ENCODE measurements at regions of chr2 and their contacts with region 1.

Region 1: DNA sequence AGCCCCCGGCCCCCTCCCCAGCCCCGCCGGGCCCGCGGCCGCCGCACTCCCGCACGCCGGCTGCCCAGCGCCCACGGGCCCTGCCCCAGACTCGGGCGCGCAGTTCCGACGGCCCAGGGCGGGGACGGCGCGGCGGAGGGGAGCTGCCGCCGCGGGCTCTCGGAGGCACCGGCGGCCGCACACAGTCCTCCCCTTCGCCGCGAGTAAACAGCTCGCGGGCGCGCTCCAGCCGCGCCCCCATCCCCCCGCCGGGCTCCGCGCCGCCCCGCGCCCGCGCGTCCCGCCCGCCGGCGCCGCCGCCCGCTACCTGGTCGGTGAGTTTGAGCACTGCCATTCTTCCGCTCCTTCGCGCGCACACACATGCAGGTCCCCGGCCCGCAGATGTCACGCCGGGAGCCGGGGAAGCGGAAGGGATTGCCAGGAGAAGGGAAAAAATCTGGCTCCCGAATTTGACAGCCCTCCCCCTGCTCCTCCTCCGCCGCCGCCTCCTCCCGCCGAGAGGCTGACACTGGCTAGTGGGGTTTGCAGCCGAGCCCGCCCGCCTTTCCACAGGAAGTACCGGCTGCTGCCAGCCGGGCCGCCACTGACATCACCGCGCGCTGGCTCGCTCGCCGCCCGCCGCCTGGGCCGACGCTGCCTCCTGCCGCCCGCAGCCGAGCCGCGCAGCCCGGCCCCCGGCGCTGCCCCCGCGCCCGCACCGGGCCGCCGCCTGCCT is at the start of gene ANKRD44:
- DNase-seq: peak; percentile 83 to 90 (median 88)
- H3K4me3 ChIP-seq: peak within 1 kb of the TSS; percentile 52
- H3K27ac ChIP-seq: peak within 1 kb of the TSS; percentile 61 to 64
- H3K4me1 ChIP-seq: peaks cover 4% of the 10 kb centered on the region
- H3K27me3 ChIP-seq: no peaks in the 10 kb centered on the region
- CTCF ChIP-seq: peak in 2 of 3 donors; percentile 68 to 78
- EP300 ChIP-seq: no peak
- POLR2A ChIP-seq: peak; percentile 67
- total RNA-seq, gene ANKRD44: 9.2 to 60.0 (median 11.5) TPM

Region 2: DNA sequence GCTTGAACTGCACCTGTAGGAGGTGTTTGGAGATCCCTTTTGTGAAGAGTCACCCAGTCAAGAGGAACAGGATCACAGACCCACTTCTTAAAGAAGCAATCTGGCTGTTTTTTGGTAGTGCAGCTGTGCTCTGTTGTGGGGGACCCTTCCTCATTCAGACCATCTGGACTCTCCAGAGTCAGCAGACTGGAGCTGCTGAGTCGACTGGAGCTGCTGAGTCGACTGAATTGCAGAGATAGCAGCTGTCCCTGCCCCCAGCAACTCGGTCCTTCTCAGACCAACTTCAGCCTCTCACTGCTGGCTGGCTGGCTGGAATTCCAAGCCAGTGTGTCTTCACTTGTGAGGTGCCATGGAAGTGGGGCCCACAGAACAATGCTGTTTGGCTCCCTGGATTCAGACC is 567.7 kb before region 1 on chr2:
- intact Hi-C with region 1: no loop called
- DNase-seq: no peak
- H3K4me3 ChIP-seq: no peak overlapping the region
- H3K27ac ChIP-seq: no peak overlapping the region
- H3K4me1 ChIP-seq: no peaks in the 10 kb centered on the region
- H3K27me3 ChIP-seq: no peaks in the 10 kb centered on the region
- CTCF ChIP-seq: no peak
- EP300 ChIP-seq: no peak
- POLR2A ChIP-seq: no peak

Region 3: DNA sequence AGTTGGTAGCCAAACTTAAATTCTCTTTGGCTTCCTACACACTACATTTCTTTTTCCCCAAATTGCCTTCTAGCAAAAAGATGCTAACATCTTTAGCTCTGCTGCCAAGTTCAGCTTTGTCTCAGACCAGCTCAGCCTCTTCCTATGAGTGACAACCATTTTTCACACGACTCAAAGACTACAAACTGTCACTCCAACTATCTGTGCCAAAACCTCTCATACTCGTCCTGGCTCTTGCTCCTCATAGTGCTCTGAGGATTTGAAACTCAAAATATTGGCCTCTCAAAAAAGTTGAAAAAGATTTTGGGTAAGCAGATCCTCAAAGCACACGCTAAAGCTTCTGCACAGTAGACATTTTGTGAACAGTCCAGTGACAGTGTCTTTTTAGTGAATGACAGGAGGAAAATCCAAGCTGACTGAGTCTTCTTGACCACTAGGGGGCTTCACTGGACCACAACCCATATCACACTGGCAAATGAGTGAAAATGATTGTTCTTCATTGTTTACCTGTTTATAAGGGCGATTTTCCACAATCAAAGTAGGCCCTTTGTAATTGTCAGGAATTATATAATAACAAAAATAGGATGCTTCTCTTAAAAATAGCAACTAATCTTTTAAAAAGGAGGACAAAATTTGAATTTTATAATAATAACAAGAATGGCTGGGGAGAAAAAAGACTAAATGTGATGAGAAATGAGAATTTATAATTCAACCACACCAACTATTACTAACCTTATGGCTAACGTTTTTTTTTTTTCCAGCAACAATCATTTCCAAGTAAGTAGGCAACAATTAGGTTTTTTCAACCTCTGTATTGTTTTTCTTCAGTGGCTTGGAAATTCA is 298.4 kb before region 1 on chr2:
- intact Hi-C with region 1: loop called in 1 of 4 experiments (anchors 10 kb)
- DNase-seq: no peak
- H3K4me3 ChIP-seq: no peak overlapping the region
- H3K27ac ChIP-seq: no peak overlapping the region
- H3K4me1 ChIP-seq: no peaks in the 10 kb centered on the region
- H3K27me3 ChIP-seq: no peaks in the 10 kb centered on the region
- CTCF ChIP-seq: peak; percentile 47 to 66 (median 56)
- EP300 ChIP-seq: no peak
- POLR2A ChIP-seq: no peak

Region 4: GRCh38 chr2:197113275-197113711 is 197.1 kb before region 1 on chr2:
- intact Hi-C with region 1: loop called in 1 of 4 experiments (anchors 10 kb)
- DNase-seq: no peak
- H3K4me3 ChIP-seq: no peak overlapping the region
- H3K27ac ChIP-seq: no peak overlapping the region
- H3K4me1 ChIP-seq: no peaks in the 10 kb centered on the region
- H3K27me3 ChIP-seq: no peaks in the 10 kb centered on the region
- CTCF ChIP-seq: peak; percentile 33 to 47 (median 35)
- EP300 ChIP-seq: no peak
- POLR2A ChIP-seq: no peak

Region 5: DNA sequence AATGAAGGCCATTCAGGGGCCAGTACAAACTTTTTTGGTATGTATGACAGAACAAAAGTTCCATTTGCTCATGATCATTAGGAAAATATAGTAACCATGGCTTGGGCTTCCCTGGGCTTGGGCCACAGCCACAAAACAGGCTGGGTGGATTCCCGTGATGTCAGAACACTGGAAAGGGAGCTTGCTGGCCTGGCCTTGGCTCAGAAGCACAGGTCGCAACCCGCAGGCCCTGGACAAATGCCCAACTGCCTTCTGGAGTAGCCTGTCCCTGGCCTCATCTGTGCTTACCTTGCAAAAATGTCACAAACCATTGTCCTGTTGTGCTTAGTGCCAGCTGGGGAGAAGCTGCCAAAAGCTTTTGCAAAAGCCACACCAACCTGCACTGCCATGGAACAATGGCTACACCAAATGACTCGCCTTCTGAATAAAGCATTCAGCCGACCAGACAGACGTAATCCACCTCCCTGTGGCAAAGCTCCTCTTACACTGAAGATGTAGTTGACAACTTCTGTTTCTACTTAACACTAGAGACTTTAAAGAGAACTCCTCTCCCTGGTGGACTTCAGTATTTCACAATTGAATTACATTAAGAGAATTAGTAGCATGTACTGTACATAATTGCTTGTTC is 125.4 kb before region 1 on chr2:
- intact Hi-C with region 1: loop called (anchors 5 to 10 kb)
- DNase-seq: peak; percentile 47 to 79 (median 59)
- H3K4me3 ChIP-seq: no peak overlapping the region
- H3K27ac ChIP-seq: no peak overlapping the region
- H3K4me1 ChIP-seq: no peaks in the 10 kb centered on the region
- H3K27me3 ChIP-seq: no peaks in the 10 kb centered on the region
- CTCF ChIP-seq: no peak
- EP300 ChIP-seq: no peak
- POLR2A ChIP-seq: no peak

Region 6: DNA sequence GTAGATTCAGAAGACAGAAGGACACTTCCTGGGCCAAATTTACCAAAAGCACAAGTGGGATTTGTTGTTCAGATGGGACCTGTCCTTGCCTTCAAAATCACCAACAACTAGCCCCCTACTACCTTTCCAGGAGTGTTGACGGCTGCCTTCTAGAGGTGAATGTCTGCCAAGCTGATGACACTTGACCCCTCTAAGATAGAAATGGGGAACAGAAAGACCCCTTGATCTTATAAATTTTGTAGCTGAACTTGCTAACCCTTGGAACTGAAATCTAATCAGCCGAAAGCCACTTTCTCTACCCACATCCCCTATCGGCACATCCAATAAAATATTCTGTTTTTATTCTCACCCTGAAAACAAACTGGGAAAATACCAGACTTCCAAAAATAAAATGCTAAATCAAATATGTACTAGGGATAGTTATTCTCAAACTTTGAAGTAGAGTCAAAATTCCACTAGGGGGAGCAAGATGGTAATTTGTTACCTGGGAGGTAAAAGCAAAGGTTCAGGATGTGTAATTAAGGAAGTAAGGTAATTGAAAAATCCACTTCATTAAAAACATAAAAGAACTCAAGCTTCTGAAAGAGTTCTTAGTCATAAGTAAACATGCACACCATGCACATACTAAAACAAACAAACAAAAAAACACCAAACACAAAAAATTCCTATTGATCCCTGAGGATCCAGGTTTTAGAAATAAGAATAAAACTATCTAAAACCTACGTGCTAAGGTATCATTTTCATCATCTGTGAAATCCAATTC is 119.1 kb before region 1 on chr2:
- intact Hi-C with region 1: loop called (anchors 5 to 10 kb)
- DNase-seq: no peak
- H3K4me3 ChIP-seq: no peak overlapping the region
- H3K27ac ChIP-seq: no peak overlapping the region
- H3K4me1 ChIP-seq: no peaks in the 10 kb centered on the region
- H3K27me3 ChIP-seq: no peaks in the 10 kb centered on the region
- CTCF ChIP-seq: peak; percentile 34 to 55 (median 45)
- EP300 ChIP-seq: no peak
- POLR2A ChIP-seq: no peak

Measured in ovary (tissue), 10 donors.